BJ (cell line): ENCODE measurements at regions of chr17 and their contacts with region 1.

Region 1: DNA sequence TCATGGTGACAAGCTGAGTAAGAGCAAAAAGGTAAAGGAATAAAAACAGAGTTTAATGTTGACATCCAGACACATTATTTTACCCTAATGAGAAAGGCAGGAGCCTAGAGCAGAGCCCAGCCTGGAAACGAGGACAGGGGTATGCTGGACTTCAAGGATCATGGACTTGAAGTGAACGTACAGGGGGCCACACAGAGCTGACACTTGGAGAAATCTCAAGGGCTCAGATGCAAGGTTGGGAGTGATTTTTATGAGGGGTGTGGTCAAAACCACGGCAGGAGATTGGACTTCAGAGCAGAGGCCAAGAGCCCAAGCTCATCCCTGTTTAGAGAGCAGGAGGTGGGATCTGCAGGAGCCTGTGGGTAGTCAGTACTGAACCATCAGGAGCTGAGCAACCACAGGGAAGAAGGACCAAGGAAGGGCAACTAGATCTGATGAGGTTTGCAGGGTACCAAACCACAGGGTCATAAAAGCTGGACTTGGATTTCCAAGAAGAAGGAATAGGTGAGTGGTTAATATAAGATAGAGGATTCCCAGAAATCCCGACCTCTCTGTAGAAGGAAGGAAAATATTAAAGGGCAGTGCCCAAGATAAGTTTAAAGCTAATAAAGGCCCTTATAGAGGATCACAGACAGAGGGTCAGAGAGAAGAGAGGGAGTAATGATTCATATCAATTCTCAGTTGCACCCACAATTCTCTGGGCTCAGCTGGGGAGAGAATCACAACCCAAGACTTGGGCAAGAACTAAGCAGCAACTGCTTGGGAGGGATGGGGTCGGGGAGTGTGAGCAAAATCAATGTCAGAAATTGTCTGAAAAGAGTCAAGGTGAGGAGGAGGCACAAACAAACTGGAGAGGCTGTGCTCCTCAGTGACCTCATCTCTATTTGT is 331.7 kb downstream of the SOX9 start:
- DNase-seq: no peak
- H3K4me3 ChIP-seq: no peak overlapping the region
- H3K27me3 ChIP-seq: no peaks in the 10 kb centered on the region
- CTCF ChIP-seq: no peak

Region 2: GRCh38 chr17:72386619-72387237 is 65.8 kb before region 1 on chr17:
- CTCF ChIA-PET with region 1: no interaction called
- POLR2A ChIA-PET with region 1: interaction called, 14 read pairs
- DNase-seq: no peak
- H3K4me3 ChIP-seq: no peak overlapping the region
- H3K27me3 ChIP-seq: no peaks in the 10 kb centered on the region
- CTCF ChIP-seq: no peak